ENCODE measurements at regions of chr13 and their contacts with region 1.

Region 1: GRCh38 chr13:111159362-111160320 is 44.5 kb downstream of the ARHGEF7 start:
- DNase-seq: no peak
- H3K27ac ChIP-seq: no peak overlapping the region
- CTCF ChIP-seq: no peak

Region 2: GRCh38 chr13:111206148-111206547 is 46.5 kb after region 1 on chr13:
- CTCF ChIA-PET with region 1: interaction called, 11 read pairs
- POLR2A ChIA-PET with region 1: no interaction called
- DNase-seq: no peak
- H3K27ac ChIP-seq: no peak overlapping the region
- CTCF ChIP-seq: no peak

Measured in RWPE1 (cell line).